Activated naive CD4-positive, alpha-beta T cell treated with anti-CD3 and anti-CD28 coated beads for 36 hours (primary cell): ENCODE measurements at regions of chr2 and their contacts with region 1.

Region 1: GRCh38 chr2:2926009-2926857 is 451.4 kb downstream of the EIPR1 start:
- DNase-seq: no peak
- H3K4me3 Mint-ChIP-seq: no peak overlapping the region
- H3K27ac Mint-ChIP-seq: no peak overlapping the region
- H3K4me1 Mint-ChIP-seq: peaks cover 2% of the 10 kb centered on the region
- H3K27me3 Mint-ChIP-seq: peaks cover 10% of the 10 kb centered on the region

Region 2: GRCh38 chr2:2646433-2647051 is 279.7 kb before region 1 on chr2:
- CTCF ChIA-PET with region 1: no interaction called
- intact Hi-C with region 1: loop called (anchors 5 kb)
- DNase-seq: peak; percentile 75
- H3K4me3 Mint-ChIP-seq: peak overlapping the region; percentile 8
- H3K27ac Mint-ChIP-seq: peak overlapping the region; percentile 69
- H3K4me1 Mint-ChIP-seq: peaks cover 40% of the 10 kb centered on the region
- H3K27me3 Mint-ChIP-seq: no peaks in the 10 kb centered on the region

Region 3: GRCh38 chr2:2902547-2903281 is 23.5 kb before region 1 on chr2:
- CTCF ChIA-PET with region 1: no interaction called
- intact Hi-C with region 1: loop called (anchors 1 kb)
- DNase-seq: no peak
- H3K4me3 Mint-ChIP-seq: no peak overlapping the region
- H3K27ac Mint-ChIP-seq: no peak overlapping the region
- H3K4me1 Mint-ChIP-seq: peaks cover 16% of the 10 kb centered on the region
- H3K27me3 Mint-ChIP-seq: no peaks in the 10 kb centered on the region

Region 4: GRCh38 chr2:3034856-3035255 is 108.6 kb after region 1 on chr2:
- CTCF ChIA-PET with region 1: no interaction called
- intact Hi-C with region 1: no loop called
- DNase-seq: no peak
- H3K4me3 Mint-ChIP-seq: no peak overlapping the region
- H3K27ac Mint-ChIP-seq: no peak overlapping the region
- H3K4me1 Mint-ChIP-seq: no peaks in the 10 kb centered on the region
- H3K27me3 Mint-ChIP-seq: peaks cover 4% of the 10 kb centered on the region